AG04449 (cell line): ENCODE measurements at regions of chr3 and their contacts with region 1.

Region 1: GRCh38 chr3:157136647-157137387 is 23.1 kb downstream of the CCNL1 start:
- DNase-seq: no peak
- H3K4me3 ChIP-seq: no peak overlapping the region
- CTCF ChIP-seq: no peak

Region 2: GRCh38 chr3:156535162-156535627 is 601.6 kb before region 1 on chr3:
- CTCF ChIA-PET with region 1: interaction called, 10 read pairs
- POLR2A ChIA-PET with region 1: no interaction called
- DNase-seq: peak; percentile 97
- H3K4me3 ChIP-seq: no peak overlapping the region
- CTCF ChIP-seq: peak; percentile 29

Region 3: GRCh38 chr3:156674046-156674910 is 462.5 kb before region 1 on chr3 and contains the start of gene TIPARP:
- CTCF ChIA-PET with region 1: interaction called, 17 read pairs
- POLR2A ChIA-PET with region 1: interaction called, 4 read pairs
- DNase-seq: peak; percentile 77
- H3K4me3 ChIP-seq: peak within 1 kb of the TSS; percentile 78
- CTCF ChIP-seq: peak; percentile 73

Region 4: DNA sequence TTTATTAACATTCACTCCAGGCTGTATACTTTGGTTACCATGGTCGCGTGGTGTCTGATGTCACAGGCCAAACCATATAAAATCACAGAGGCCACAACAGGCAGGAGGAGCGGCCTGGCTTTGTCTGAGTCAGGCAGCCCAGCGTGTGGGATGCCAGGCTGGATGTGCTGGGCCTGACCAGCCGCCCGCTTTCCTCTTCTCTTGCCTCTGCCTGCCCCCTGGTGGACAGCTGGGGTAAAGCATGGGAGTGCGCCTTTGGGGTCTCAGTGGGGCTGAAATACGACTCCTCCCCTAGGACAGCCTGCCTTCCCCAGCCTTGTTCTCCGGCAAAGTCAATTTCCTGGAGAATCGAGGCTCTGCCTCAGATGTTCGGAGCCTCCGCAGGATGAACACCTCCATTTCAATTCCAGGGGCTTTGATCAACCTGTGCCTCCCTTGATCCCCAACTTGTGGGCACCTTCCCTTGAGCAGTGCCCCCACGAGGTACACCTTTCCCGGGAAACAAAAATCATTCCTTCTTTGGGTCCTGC is 55.1 kb before region 1 on chr3:
- CTCF ChIA-PET with region 1: interaction called, 90 read pairs
- POLR2A ChIA-PET with region 1: no interaction called
- DNase-seq: peak; percentile 60
- H3K4me3 ChIP-seq: no peak overlapping the region
- CTCF ChIP-seq: peak; percentile 96

Region 5: GRCh38 chr3:157148196-157148889 is 11.5 kb after region 1 on chr3:
- CTCF ChIA-PET with region 1: interaction called, 64 read pairs
- POLR2A ChIA-PET with region 1: no interaction called
- DNase-seq: no peak
- H3K4me3 ChIP-seq: no peak overlapping the region
- CTCF ChIP-seq: no peak